ENCODE measurements at regions of chr14 and their contacts with region 1.

Region 1: GRCh38 chr14:81453166-81453766 is 53.1 kb upstream of the STON2 start:
- DNase-seq: peak; percentile 63 to 70 (median 66)
- ATAC-seq: peak; percentile 83
- H3K4me3 ChIP-seq: no peak overlapping the region
- H3K27ac ChIP-seq: no peak overlapping the region
- H3K4me1 ChIP-seq: peaks cover 10% of the 10 kb centered on the region
- H3K27me3 ChIP-seq: no peaks in the 10 kb centered on the region
- CTCF ChIP-seq: peak; percentile 59 to 93 (median 88)
- POLR2A ChIP-seq: no peak

Region 2: GRCh38 chr14:81005540-81006228 is 447.6 kb before region 1 on chr14:
- intact Hi-C with region 1: loop called (anchors 10 kb)
- DNase-seq: no peak
- ATAC-seq: no peak
- H3K4me3 ChIP-seq: no peak overlapping the region
- H3K27ac ChIP-seq: no peak overlapping the region
- H3K4me1 ChIP-seq: no peaks in the 10 kb centered on the region
- H3K27me3 ChIP-seq: no peaks in the 10 kb centered on the region
- CTCF ChIP-seq: no peak
- POLR2A ChIP-seq: no peak

Region 3: GRCh38 chr14:81269100-81269978 is 183.9 kb before region 1 on chr14:
- intact Hi-C with region 1: loop called (anchors 5 kb)
- DNase-seq: peak in 3 of 4 donors; percentile 28 to 69 (median 47)
- ATAC-seq: peak; percentile 92
- H3K4me3 ChIP-seq: no peak overlapping the region
- H3K27ac ChIP-seq: no peak overlapping the region
- H3K4me1 ChIP-seq: no peaks in the 10 kb centered on the region
- H3K27me3 ChIP-seq: no peaks in the 10 kb centered on the region
- CTCF ChIP-seq: peak; percentile 70 to 94 (median 89)
- POLR2A ChIP-seq: no peak

Region 4: DNA sequence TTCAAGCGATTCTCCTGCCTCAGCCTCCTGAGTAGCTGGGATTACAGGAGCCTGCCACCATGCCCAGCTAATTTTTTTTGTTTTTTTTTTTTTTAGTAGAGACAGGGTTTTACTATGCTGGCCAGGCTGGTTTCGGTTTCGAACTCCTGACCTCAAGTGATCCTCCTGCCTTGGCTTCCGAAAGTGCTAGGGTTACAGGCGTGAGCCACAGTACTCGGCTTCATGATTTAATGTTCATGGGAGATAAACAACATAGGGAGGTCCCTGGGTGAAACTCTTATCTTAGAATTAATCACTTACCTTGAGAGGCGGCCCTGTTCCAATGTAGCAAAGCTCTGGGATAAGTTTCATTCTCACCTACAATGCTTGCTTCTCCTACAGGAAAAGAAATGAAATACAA is 32.1 kb after region 1 on chr14:
- intact Hi-C with region 1: no loop called
- DNase-seq: peak in 1 of 4 donors; percentile 49
- ATAC-seq: peak; percentile 60
- H3K4me3 ChIP-seq: no peak overlapping the region
- H3K27ac ChIP-seq: peak overlapping the region in 3 of 4 donors; percentile 44 to 75 (median 65)
- H3K4me1 ChIP-seq: peaks cover 64% of the 10 kb centered on the region
- H3K27me3 ChIP-seq: no peaks in the 10 kb centered on the region
- CTCF ChIP-seq: no peak
- POLR2A ChIP-seq: no peak

Region 5: DNA sequence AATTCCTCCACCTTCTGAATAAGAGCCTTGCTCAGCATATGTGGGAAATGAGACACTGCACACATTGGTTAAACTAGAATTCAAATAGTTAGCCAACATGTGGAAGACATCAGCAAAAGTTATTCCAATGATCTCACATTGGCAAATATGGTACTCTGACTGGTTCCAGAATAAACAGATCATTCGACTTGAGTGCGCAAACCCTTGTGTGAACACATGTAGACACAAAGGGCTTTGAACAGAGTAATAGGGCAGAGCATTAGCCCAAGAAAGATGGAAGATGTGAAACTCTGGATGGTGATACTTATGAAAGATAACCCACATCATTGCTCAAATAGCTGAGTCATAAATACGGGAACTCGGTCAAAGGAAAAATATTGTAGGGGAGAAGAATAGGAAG is 1213.7 kb after region 1 on chr14:
- intact Hi-C with region 1: no loop called
- DNase-seq: no peak
- ATAC-seq: no peak
- H3K4me3 ChIP-seq: no peak overlapping the region
- H3K27ac ChIP-seq: no peak overlapping the region
- H3K4me1 ChIP-seq: no peaks in the 10 kb centered on the region
- H3K27me3 ChIP-seq: no peaks in the 10 kb centered on the region
- CTCF ChIP-seq: no peak
- POLR2A ChIP-seq: no peak